CD4-positive, alpha-beta T cell (primary cell): ENCODE measurements at regions of chr16 and their contacts with region 1.

Region 1: DNA sequence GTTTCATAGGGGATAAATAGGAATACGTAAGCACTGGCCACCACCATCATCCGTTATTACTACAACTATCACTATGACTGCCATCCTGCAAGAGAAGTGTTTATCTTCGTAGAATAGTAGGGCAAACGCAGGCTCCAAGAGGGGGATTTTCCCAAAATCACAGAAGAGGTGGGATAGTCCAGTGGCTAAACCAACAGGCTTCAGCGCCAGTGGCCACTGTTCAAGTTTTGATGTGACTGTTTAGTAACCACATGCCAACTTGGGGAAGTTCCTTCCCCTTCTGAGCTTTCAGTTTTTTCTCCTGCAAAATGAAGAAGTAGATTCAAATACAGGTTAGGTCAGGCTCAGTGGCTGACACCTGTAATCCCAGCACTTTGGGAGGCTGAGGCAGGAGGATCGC is 60.7 kb upstream of the GRIN2A start:
- DNase-seq: peak in 1 of 14 experiments; percentile 4
- ATAC-seq: no peak
- H3K4me3 ChIP-seq: no peak overlapping the region
- H3K4me3 Mint-ChIP-seq: no peak overlapping the region
- H3K27ac ChIP-seq: no peak overlapping the region
- H3K27ac Mint-ChIP-seq: no peak overlapping the region
- H3K4me1 ChIP-seq: no peaks in the 10 kb centered on the region
- H3K4me1 Mint-ChIP-seq: no peaks in the 10 kb centered on the region
- H3K27me3 ChIP-seq: no peaks in the 10 kb centered on the region
- H3K27me3 Mint-ChIP-seq: peaks cover 13% of the 10 kb centered on the region
- CTCF ChIP-seq: no peak

Region 2: DNA sequence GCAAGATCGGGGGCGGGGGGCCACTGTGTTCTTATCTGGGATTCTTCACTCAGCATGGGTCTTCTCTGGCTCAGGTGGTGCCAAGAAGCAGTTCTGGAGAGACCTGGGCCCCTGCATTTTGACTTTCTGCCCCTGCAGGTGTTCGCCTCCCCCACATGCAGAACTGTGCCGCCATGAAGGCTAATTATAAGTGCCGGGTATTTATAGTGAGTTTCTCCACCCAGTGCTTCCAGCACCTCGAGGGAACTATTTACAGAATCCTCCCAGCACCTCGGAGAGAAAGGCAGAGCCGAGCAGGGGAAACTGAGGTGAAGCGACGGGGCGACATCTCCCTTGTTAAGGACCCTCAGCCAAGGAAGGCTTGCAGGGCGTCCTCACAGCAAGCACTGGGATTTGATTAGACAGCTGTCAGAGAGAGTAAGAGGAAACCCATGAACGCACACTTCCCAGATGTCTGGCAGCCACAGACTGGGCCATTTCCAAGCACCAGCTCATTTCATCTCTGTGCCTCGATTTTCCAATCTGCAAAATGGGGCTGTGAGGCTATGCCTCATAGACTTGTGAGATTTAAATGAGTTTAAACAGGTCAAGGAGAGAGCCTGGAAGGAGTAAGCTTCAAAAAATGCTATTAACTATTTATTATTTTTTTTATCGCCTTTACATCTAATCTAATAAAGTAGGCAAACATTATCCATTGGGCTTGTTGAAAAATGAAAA is 24.3 kb before region 1 on chr16:
- CTCF ChIA-PET with region 1: no interaction called
- POLR2A ChIA-PET with region 1: no interaction called
- intact Hi-C with region 1: no loop called
- DNase-seq: no peak
- ATAC-seq: no peak
- H3K4me3 ChIP-seq: no peak overlapping the region
- H3K4me3 Mint-ChIP-seq: no peak overlapping the region
- H3K27ac ChIP-seq: no peak overlapping the region
- H3K27ac Mint-ChIP-seq: no peak overlapping the region
- H3K4me1 ChIP-seq: no peaks in the 10 kb centered on the region
- H3K4me1 Mint-ChIP-seq: no peaks in the 10 kb centered on the region
- H3K27me3 ChIP-seq: peaks cover 3 to 7% of the 10 kb centered on the region in 2 experiments
- H3K27me3 Mint-ChIP-seq: no peaks in the 10 kb centered on the region
- CTCF ChIP-seq: no peak

Region 3: GRCh38 chr16:10232757-10233156 is 10.2 kb before region 1 on chr16:
- CTCF ChIA-PET with region 1: no interaction called
- POLR2A ChIA-PET with region 1: no interaction called
- intact Hi-C with region 1: loop called in 1 of 2 experiments (anchors 1 kb)
- DNase-seq: no peak
- ATAC-seq: no peak
- H3K4me3 ChIP-seq: no peak overlapping the region
- H3K4me3 Mint-ChIP-seq: no peak overlapping the region
- H3K27ac ChIP-seq: no peak overlapping the region
- H3K27ac Mint-ChIP-seq: no peak overlapping the region
- H3K4me1 ChIP-seq: no peaks in the 10 kb centered on the region
- H3K4me1 Mint-ChIP-seq: no peaks in the 10 kb centered on the region
- H3K27me3 ChIP-seq: no peaks in the 10 kb centered on the region
- H3K27me3 Mint-ChIP-seq: peaks cover 13% of the 10 kb centered on the region
- CTCF ChIP-seq: no peak